ENCODE measurements at regions of chr5 and their contacts with region 1.

Region 1: DNA sequence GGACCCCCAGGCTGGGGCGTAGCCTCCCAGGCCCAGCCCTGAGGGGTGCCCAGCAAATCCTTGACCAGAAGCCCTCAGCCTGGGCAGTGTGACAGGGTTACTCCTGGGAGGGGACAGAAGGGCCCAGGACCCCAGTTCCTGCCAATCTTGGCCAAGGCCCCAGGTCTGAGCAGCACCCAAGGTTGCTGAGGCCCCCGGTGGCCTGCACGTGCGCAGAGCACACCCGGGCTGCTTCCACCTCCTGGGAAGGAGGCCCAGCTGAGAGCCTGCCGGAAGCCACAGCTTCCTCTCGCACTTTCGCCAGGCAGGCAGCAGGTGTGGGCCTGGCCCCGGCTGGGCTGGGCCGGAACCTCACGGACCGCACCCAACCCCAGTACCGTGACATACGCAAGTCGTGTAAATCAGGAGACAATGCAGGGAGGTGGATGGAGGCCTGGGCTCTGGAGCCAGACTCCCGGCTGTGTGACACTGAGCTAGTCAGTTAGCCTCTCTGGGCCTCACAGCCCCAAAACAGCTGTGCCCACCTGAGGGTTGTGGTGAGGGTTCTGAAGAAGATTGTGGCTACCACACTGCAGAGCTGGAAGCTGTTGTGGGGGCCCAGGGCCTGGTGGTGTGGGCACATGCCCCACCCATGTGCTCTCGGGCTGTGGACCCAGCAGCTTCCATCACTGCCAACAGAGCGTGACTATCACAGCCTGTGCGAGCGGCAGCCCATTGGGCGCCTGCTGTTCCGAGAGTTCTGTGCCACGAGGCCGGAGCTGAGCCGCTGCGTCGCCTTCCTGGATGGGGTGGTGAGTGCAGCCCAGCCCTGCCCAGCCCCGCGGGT is 5.1 kb downstream of the GRK6 start:
- DNase-seq: peak in 34 of 35 experiments; percentile 54 to 85 (median 67)
- ATAC-seq: peak; percentile 29 to 49 (median 47)
- H3K4me3 ChIP-seq: peak overlapping the region; percentile 41 to 53
- H3K4me3 Mint-ChIP-seq: peak overlapping the region; percentile 79 to 92 (median 86)
- H3K27ac ChIP-seq: peak overlapping the region; percentile 84
- H3K27ac Mint-ChIP-seq: peak overlapping the region; percentile 95
- H3K4me1 ChIP-seq: peaks cover 64 to 95% of the 10 kb centered on the region in 2 experiments
- H3K4me1 Mint-ChIP-seq: peaks cover 61 to 84% (median 84%) of the 10 kb centered on the region in 3 donors
- H3K27me3 ChIP-seq: no peaks in the 10 kb centered on the region
- H3K27me3 Mint-ChIP-seq: no peaks in the 10 kb centered on the region

Region 2: GRCh38 chr5:177362610-177363507 is 68.7 kb before region 1 on chr5:
- CTCF ChIA-PET with region 1: no interaction called
- POLR2A ChIA-PET with region 1: no interaction called
- DNase-seq: peak; percentile 34 to 88 (median 56)
- ATAC-seq: peak; percentile 75 to 79 (median 79)
- H3K4me3 ChIP-seq: peak overlapping the region; percentile 54 to 56
- H3K4me3 Mint-ChIP-seq: peak overlapping the region; percentile 77 to 82 (median 80)
- H3K27ac ChIP-seq: peak overlapping the region; percentile 74
- H3K27ac Mint-ChIP-seq: peak overlapping the region; percentile 95 to 96
- H3K4me1 ChIP-seq: peaks cover 45 to 90% of the 10 kb centered on the region in 2 experiments
- H3K4me1 Mint-ChIP-seq: peaks cover 46 to 75% (median 68%) of the 10 kb centered on the region in 3 donors
- H3K27me3 ChIP-seq: no peaks in the 10 kb centered on the region
- H3K27me3 Mint-ChIP-seq: no peaks in the 10 kb centered on the region

Region 3: DNA sequence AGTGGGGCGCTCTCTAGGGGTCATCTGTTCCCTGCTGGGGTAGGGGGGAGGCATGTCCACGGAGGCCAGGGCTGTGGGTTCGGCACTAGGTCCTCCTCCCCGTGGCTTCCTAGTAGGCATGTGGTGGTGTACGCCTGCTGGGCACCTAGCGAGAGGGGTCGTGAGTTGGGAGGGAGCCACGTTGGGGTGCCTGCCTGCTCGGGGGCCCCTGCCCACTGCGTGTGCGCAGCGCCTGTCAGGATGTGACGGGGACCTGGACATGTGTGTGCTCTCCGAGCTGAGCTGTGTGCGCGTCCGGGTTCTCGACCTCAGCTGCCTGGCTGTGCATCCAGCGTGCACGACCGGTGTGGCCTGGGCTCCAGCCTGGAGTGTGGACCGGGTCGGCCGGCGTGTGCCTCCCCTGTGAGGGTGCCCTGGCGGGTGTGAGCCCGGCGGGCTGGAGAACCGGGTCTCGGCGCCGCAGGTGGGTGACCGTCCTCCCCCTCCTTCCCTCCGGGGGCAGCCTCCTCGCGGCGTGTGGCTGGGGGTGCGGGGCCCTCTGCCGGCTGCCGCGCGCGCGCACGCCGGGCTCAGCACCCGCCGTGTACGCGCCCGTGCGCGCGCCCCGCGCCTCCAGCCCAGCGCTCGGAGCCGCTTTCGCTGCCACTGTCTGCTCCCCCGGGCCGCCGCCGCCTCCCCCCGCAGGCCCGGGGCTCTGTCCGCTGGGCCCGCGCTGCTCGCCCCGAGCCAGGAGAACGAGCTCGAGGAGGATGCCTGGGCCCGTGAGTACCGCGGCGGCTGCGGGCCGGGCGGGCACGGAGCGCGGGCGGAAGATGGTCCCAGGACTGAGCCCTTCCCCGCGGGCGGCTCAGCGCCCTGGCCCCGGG is 14.9 kb after region 1 on chr5 and contains the start of gene PRR7:
- CTCF ChIA-PET with region 1: interaction called, 4 to 17 read pairs
- POLR2A ChIA-PET with region 1: interaction called, 5 to 27 read pairs
- DNase-seq: peak; percentile 48 to 90 (median 72)
- ATAC-seq: peak; percentile 48 to 66 (median 64)
- H3K4me3 ChIP-seq: peak within 1 kb of the TSS; percentile 52 to 55
- H3K4me3 Mint-ChIP-seq: peak within 1 kb of the TSS; percentile 72 to 78 (median 72)
- H3K27ac ChIP-seq: peak within 1 kb of the TSS; percentile 87
- H3K27ac Mint-ChIP-seq: peak within 1 kb of the TSS; percentile 95
- H3K4me1 ChIP-seq: peaks cover 19 to 74% of the 10 kb centered on the region in 2 experiments
- H3K4me1 Mint-ChIP-seq: peaks cover 47 to 58% (median 53%) of the 10 kb centered on the region in 3 donors
- H3K27me3 ChIP-seq: peaks cover 0 to 2% of the 10 kb centered on the region in 2 experiments
- H3K27me3 Mint-ChIP-seq: no peaks in the 10 kb centered on the region
- total RNA-seq, gene PRR7: 9.5 to 28.2 (median 12.3) TPM